GM12878 (cell line): ENCODE measurements at regions of chr3 and their contacts with region 1.

Region 1: DNA sequence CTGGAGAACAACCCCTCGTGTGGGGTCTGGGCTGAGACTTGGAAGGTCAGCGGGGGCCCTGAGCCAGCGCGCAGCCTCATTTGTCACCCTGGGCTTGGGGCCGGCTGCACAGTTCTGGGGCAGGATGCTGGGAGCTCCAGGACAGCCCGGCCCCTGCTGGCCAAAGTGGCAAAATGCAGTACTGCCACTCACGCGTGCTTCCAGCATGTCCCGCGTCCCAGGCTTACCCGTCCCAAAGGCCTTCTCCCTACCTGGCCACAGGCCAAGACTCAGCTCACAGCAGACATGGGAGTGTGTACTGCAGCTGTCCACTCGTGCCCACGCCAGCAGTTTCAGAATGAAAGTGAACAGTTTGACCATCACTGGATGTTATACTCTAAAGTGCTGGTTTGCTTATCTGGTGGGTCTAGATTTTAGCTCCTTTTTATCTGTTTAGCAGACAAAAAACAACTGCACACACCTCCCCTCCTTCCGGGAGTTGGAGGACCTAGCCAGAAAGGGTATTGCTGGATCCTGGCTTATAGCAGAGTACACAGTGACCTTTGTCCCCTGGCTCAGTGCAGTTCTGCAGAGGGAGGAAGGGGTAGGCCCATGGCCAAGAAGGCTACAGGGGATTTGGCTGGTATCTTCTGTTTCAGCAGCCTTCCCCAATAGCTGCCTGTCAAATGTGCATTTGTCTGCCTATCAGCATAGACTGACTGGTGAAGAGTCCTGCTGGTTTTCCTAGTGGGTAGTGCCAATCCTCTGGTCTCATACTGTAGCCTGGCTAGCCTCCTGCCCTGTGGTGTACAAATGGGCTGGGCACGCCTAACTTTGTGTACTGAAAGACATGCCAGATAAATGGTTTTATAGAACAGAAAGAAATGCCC is 23.2 kb upstream of the IP6K2 start:
- DNase-seq: no peak
- ATAC-seq: peak; percentile 99
- H3K4me3 ChIP-seq: no peak overlapping the region
- H3K27ac ChIP-seq: no peak overlapping the region
- H3K4me1 ChIP-seq: peaks cover 9% of the 10 kb centered on the region
- H3K27me3 ChIP-seq: no peaks in the 10 kb centered on the region
- CTCF ChIP-seq: peak; percentile 73 to 91 (median 77)
- EP300 ChIP-seq: no peak
- POLR2A ChIP-seq: no peak
- RAD21 ChIP-seq: peak; percentile 31

Region 2: DNA sequence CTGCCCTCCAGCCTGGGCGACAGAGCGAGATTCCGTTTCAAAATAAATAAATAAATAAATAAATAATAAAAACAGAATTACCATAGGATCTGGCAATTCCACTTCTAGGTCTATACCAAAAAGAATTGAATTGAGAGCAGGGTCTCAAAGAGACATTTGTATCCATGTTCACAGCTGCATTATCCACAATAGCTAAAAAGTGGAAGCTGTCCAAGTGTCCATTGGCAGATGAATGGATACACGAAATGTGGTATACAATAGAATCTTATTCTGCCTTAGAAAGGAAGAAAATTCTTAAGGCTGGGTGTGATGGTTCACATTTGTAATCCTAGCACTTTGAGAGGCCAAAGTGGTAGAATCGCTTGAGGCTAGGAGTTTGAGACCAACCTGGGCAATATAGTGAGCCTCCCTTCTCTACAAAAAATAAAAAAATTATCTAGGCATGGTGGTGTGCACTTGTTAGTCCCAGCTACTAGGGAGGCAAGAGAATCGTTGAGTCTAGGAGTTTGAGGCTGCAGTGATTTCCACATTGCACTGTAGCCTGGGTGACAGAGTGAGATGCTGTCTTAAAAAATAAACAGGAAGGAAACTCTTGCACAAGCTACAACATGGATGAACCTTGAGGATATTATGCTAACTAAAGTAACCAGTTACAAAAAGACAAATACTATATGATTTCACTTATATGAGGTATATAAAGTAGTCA is 207.8 kb before region 1 on chr3:
- CTCF ChIA-PET with region 1: no interaction called
- POLR2A ChIA-PET with region 1: no interaction called
- RAD21 ChIA-PET with region 1: no interaction called
- SMC1A ChIA-PET with region 1: no interaction called
- in situ Hi-C with region 1: no loop called
- intact Hi-C with region 1: no loop called
- DNase-seq: no peak
- ATAC-seq: no peak
- H3K4me3 ChIP-seq: no peak overlapping the region
- H3K27ac ChIP-seq: no peak overlapping the region
- H3K4me1 ChIP-seq: no peaks in the 10 kb centered on the region
- H3K27me3 ChIP-seq: no peaks in the 10 kb centered on the region
- CTCF ChIP-seq: no peak
- EP300 ChIP-seq: no peak
- POLR2A ChIP-seq: no peak
- RAD21 ChIP-seq: no peak

Region 3: GRCh38 chr3:48644898-48645760 is 95.1 kb before region 1 on chr3:
- CTCF ChIA-PET with region 1: no interaction called
- POLR2A ChIA-PET with region 1: no interaction called
- RAD21 ChIA-PET with region 1: no interaction called
- SMC1A ChIA-PET with region 1: no interaction called
- in situ Hi-C with region 1: no loop called
- intact Hi-C with region 1: no loop called
- DNase-seq: no peak
- ATAC-seq: no peak
- H3K4me3 ChIP-seq: no peak overlapping the region
- H3K27ac ChIP-seq: no peak overlapping the region
- H3K4me1 ChIP-seq: no peaks in the 10 kb centered on the region
- H3K27me3 ChIP-seq: no peaks in the 10 kb centered on the region
- CTCF ChIP-seq: no peak
- EP300 ChIP-seq: no peak
- POLR2A ChIP-seq: no peak
- RAD21 ChIP-seq: no peak

Region 4: DNA sequence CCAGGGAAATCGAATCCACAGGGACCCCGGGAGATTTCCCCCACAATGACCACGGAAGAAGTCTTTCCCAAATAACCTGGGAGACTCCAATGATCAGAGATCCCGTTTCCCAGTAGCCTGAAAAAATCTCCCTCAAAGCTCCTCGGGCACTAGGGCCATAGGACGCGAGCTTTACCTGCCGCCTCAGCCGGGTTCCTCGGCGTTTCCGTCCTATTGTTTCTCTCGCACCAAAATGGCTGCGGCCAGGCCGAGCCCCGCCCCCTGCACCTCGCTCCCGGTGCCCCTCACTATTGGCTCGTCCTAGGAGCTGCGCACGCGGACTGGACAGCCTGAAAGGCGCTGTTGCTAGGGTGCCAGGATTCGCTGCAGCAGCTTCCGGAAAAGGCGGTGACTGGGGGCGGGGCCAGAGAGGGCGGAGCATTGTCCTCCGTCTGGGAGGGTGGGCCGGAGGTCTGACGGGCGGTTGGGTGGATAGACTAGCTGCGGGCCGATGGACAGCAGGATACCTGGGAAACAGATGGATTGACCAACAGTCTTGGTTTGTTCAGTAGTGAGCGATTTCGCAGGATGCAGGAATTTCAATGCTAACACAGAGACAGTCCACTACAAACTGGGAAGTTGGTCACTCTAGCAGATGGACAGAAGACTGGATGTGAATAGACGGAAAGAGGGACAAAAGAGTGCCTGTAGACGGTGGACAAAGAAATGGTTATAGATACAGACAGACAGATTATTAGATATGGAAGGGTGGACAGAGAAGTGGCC is 23.0 kb before region 1 on chr3 and contains the start of gene IP6K2:
- CTCF ChIA-PET with region 1: interaction called, 13 read pairs
- POLR2A ChIA-PET with region 1: no interaction called
- RAD21 ChIA-PET with region 1: no interaction called
- SMC1A ChIA-PET with region 1: interaction called, 8 read pairs
- in situ Hi-C with region 1: no loop called
- intact Hi-C with region 1: no loop called
- DNase-seq: peak; percentile 89
- ATAC-seq: peak; percentile 99
- H3K4me3 ChIP-seq: peak within 1 kb of the TSS; percentile 90
- H3K27ac ChIP-seq: peak within 1 kb of the TSS; percentile 97
- H3K4me1 ChIP-seq: peaks cover 10% of the 10 kb centered on the region
- H3K27me3 ChIP-seq: no peaks in the 10 kb centered on the region
- CTCF ChIP-seq: no peak
- EP300 ChIP-seq: 0 out of 4 replicates have a peak, but pooled peaks of 1 of the 2 experiments have one; percentile 1
- POLR2A ChIP-seq: peak; percentile 95
- RAD21 ChIP-seq: no peak
- polyA plus RNA-seq, gene IP6K2: 25.8 to 37.6 TPM

Region 5: DNA sequence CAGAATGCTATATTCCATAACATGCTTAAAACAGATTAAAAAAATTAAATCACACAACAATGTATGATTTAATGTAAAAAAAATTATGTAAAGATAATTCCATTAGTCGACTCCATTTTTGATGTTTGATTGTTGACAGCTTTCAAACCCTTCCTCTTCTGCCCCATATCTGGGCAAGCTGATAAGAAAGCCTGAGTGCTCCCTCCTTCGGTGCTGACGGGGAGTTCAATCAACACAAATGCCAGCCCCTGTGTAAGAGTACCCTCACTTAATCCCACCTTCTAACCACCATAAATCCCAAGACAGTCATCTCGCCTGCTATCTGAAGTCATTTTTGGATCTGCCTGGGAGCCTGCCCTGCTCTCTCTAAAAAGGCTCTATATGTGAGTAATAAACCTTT is 36.7 kb after region 1 on chr3:
- CTCF ChIA-PET with region 1: no interaction called
- POLR2A ChIA-PET with region 1: no interaction called
- RAD21 ChIA-PET with region 1: no interaction called
- SMC1A ChIA-PET with region 1: no interaction called
- in situ Hi-C with region 1: no loop called
- intact Hi-C with region 1: no loop called
- DNase-seq: no peak
- ATAC-seq: no peak
- H3K4me3 ChIP-seq: no peak overlapping the region
- H3K27ac ChIP-seq: no peak overlapping the region
- H3K4me1 ChIP-seq: no peaks in the 10 kb centered on the region
- H3K27me3 ChIP-seq: no peaks in the 10 kb centered on the region
- CTCF ChIP-seq: no peak
- EP300 ChIP-seq: no peak
- POLR2A ChIP-seq: no peak
- RAD21 ChIP-seq: no peak